Endothelial cell of umbilical vein (primary cell): ENCODE measurements at regions of chr11 and their contacts with region 1.

Region 1: GRCh38 chr11:128448200-128448886 is 139.0 kb downstream of the ETS1 start:
- DNase-seq: no peak
- H3K4me3 ChIP-seq: no peak overlapping the region
- H3K27ac ChIP-seq: no peak overlapping the region
- H3K4me1 ChIP-seq: no peaks in the 10 kb centered on the region
- H3K27me3 ChIP-seq: no peaks in the 10 kb centered on the region
- CTCF ChIP-seq: no peak
- POLR2A ChIP-seq: no peak

Region 2: GRCh38 chr11:128039140-128040021 is 409.0 kb before region 1 on chr11:
- CTCF ChIA-PET with region 1: no interaction called
- POLR2A ChIA-PET with region 1: no interaction called
- dilution Hi-C with region 1: no loop called
- intact Hi-C with region 1: loop called (anchors 10 kb)
- DNase-seq: peak; percentile 74
- H3K4me3 ChIP-seq: no peak overlapping the region
- H3K27ac ChIP-seq: no peak overlapping the region
- H3K4me1 ChIP-seq: peaks cover 14% of the 10 kb centered on the region
- H3K27me3 ChIP-seq: no peaks in the 10 kb centered on the region
- CTCF ChIP-seq: no peak
- POLR2A ChIP-seq: no peak

Region 3: DNA sequence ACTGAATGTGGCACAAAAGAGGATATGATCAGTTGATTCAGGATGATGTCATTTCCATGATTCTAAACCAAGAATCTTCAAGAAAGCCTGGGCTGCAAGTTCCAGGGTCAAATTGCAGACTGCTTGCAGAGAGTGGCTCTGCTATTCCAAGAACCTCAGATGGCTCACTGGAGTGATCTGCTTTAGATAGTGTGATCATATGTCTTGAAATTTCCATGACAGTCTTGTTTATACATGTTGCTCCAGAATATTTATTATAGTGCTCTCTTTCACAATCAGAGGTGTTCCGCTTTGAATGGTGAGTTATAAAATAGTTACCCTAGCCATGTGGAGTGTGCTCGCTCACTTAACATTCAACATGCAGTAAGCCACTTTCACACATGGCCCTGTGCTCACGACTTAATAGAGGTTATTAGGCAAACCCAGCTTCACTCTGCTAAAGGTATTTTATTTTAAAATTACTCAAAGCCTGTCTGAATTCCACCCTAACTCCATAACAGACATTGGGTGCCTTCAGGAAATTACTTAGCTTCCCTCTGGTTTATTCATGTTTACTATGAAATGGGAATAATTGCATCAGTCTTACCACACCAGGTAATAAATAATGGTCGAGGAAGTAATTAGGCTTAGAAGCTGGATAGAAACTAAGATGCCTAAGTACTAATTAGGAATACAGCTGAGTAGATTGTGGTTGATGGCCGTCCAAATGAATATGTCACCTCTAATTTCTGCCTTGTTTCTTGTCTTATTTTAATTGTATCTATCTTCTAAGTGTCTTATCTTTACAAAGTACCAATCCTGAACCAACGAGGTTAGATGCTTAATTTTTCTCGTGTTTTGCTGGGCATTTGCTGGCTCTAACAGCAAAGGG is 48.9 kb before region 1 on chr11:
- CTCF ChIA-PET with region 1: no interaction called
- POLR2A ChIA-PET with region 1: no interaction called
- dilution Hi-C with region 1: no loop called
- intact Hi-C with region 1: loop called (anchors 2 kb)
- DNase-seq: peak; percentile 50
- H3K4me3 ChIP-seq: no peak overlapping the region
- H3K27ac ChIP-seq: no peak overlapping the region
- H3K4me1 ChIP-seq: peaks cover 12% of the 10 kb centered on the region
- H3K27me3 ChIP-seq: no peaks in the 10 kb centered on the region
- CTCF ChIP-seq: no peak
- POLR2A ChIP-seq: no peak